Mucosa of descending colon (tissue), 3 donors: ENCODE measurements at regions of chr5 and their contacts with region 1.

Region 1: GRCh38 chr5:59126708-59127573 is 544.1 kb downstream of the RAB3C start:
- DNase-seq: no peak
- ATAC-seq: no peak
- H3K4me3 ChIP-seq: no peak overlapping the region
- H3K4me1 ChIP-seq: peaks cover 13% of the 10 kb centered on the region
- CTCF ChIP-seq: no peak

Region 2: GRCh38 chr5:59039296-59040023 is 87.5 kb before region 1 on chr5:
- intact Hi-C with region 1: loop called in 1 of 2 experiments (anchors 5 kb)
- DNase-seq: peak; percentile 78 to 90 (median 82)
- ATAC-seq: peak; percentile 83
- H3K4me3 ChIP-seq: peak overlapping the region; percentile 29
- H3K4me1 ChIP-seq: peaks cover 17% of the 10 kb centered on the region
- CTCF ChIP-seq: no peak

Region 3: DNA sequence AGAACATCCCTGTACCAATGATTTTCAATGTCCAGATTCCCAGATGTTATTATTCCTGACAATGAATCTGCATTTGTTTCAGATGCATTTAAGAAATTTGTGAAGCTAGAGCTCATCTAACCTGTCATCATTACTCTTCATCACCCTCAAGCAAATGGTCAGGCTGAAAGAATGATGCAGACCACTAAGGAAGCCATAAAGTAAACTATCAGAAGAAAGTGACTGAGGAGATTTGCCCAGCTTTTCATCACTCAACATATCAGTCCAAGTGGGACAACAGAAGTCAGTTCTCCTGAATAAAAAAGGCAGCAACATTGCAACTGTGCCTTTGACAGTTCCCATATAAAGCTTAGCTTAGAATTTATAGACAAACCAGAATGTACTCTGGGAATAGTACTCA is 346.7 kb after region 1 on chr5:
- intact Hi-C with region 1: no loop called
- DNase-seq: no peak
- ATAC-seq: no peak
- H3K4me3 ChIP-seq: no peak overlapping the region
- H3K4me1 ChIP-seq: no peaks in the 10 kb centered on the region
- CTCF ChIP-seq: no peak